Cardiac septum (tissue), 1 donor: ENCODE measurements at regions of chr7 and their contacts with region 1.

Region 1: GRCh38 chr7:1473864-1474512 is 14.7 kb upstream of the MICALL2 start:
- DNase-seq: peak; percentile 93

Region 2: GRCh38 chr7:1193593-1194424 is 280.2 kb before region 1 on chr7:
- intact Hi-C with region 1: loop called (anchors 10 kb)
- DNase-seq: peak; percentile 82

Region 3: GRCh38 chr7:1432411-1433082 is 41.4 kb before region 1 on chr7:
- intact Hi-C with region 1: loop called (anchors 5 kb)
- DNase-seq: peak; percentile 84